CD4-positive, alpha-beta T cell (primary cell): ENCODE measurements at regions of chr7 and their contacts with region 1.

Region 1: DNA sequence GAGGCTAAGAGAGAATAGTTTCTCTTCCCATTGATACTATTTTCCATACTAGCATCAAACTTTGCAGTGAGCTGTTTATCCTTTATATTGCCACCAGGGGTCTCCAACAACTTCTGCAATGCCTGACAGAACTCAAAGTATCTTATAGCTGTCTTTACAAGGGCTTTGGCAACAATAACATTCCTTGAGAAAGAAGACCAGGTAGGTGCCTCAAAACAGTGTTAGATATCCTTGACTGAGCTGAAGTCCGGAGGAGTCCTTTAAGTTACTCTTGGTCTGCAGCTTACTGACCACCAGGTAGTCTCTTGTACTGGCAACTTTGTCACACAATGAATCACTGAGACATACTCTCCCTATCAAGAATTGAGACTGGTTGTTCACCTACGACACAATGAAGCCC is 30.0 kb upstream of the TES start:
- DNase-seq: peak in 8 of 14 experiments; percentile 4 to 78 (median 37)
- ATAC-seq: peak; percentile 91
- H3K4me3 ChIP-seq: no peak overlapping the region
- H3K4me3 Mint-ChIP-seq: no peak overlapping the region
- H3K27ac ChIP-seq: no peak overlapping the region
- H3K27ac Mint-ChIP-seq: no peak overlapping the region
- H3K4me1 ChIP-seq: peaks cover 3% of the 10 kb centered on the region
- H3K4me1 Mint-ChIP-seq: peaks cover 10% of the 10 kb centered on the region
- H3K27me3 ChIP-seq: no peaks in the 10 kb centered on the region
- H3K27me3 Mint-ChIP-seq: no peaks in the 10 kb centered on the region
- CTCF ChIP-seq: peak; percentile 85

Region 2: GRCh38 chr7:116224492-116225098 is 44.3 kb after region 1 on chr7:
- CTCF ChIA-PET with region 1: interaction called, 12 read pairs
- POLR2A ChIA-PET with region 1: interaction called, 4 read pairs
- intact Hi-C with region 1: no loop called
- DNase-seq: peak in 2 of 14 experiments; percentile 58 to 60
- ATAC-seq: peak; percentile 49
- H3K4me3 ChIP-seq: peak overlapping the region; percentile 19
- H3K4me3 Mint-ChIP-seq: peak overlapping the region; percentile 61
- H3K27ac ChIP-seq: no peak overlapping the region
- H3K27ac Mint-ChIP-seq: peak overlapping the region; percentile 73
- H3K4me1 ChIP-seq: peaks cover 44% of the 10 kb centered on the region
- H3K4me1 Mint-ChIP-seq: peaks cover 92% of the 10 kb centered on the region
- H3K27me3 ChIP-seq: no peaks in the 10 kb centered on the region
- H3K27me3 Mint-ChIP-seq: no peaks in the 10 kb centered on the region
- CTCF ChIP-seq: no peak

Region 3: DNA sequence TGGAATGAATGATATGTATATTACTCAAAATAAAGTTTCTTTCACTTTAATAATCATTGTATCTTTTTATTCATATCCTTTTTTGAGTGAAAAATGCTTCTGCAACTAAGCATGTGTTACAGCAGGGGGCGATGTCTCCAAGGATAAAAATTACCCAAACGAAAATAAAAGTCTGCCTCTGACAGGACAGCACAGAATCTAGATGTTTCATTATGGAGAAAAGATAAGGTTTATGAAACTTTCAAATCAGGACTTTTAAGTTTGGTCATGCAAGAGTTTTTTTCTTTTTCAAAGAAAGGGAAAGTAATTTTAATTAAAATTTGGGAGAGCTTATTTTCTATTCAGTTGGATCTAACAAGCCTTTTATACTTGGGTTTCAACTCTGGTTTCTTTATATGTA is 78.4 kb after region 1 on chr7:
- CTCF ChIA-PET with region 1: interaction called, 12 read pairs
- POLR2A ChIA-PET with region 1: interaction called, 3 read pairs
- intact Hi-C with region 1: no loop called
- DNase-seq: peak in 5 of 14 experiments; percentile 16 to 71 (median 56)
- ATAC-seq: peak; percentile 76
- H3K4me3 ChIP-seq: no peak overlapping the region
- H3K4me3 Mint-ChIP-seq: no peak overlapping the region
- H3K27ac ChIP-seq: no peak overlapping the region
- H3K27ac Mint-ChIP-seq: peak overlapping the region; percentile 61
- H3K4me1 ChIP-seq: no peaks in the 10 kb centered on the region
- H3K4me1 Mint-ChIP-seq: peaks cover 20% of the 10 kb centered on the region
- H3K27me3 ChIP-seq: no peaks in the 10 kb centered on the region
- H3K27me3 Mint-ChIP-seq: no peaks in the 10 kb centered on the region
- CTCF ChIP-seq: peak; percentile 77

Region 4: GRCh38 chr7:116588641-116589594 is 408.6 kb after region 1 on chr7:
- CTCF ChIA-PET with region 1: interaction called, 4 read pairs
- POLR2A ChIA-PET with region 1: no interaction called
- intact Hi-C with region 1: loop called in 1 of 2 experiments (anchors 1 kb)
- DNase-seq: peak in 3 of 14 experiments; percentile 46 to 61 (median 57)
- ATAC-seq: no peak
- H3K4me3 ChIP-seq: no peak overlapping the region
- H3K4me3 Mint-ChIP-seq: no peak overlapping the region
- H3K27ac ChIP-seq: no peak overlapping the region
- H3K27ac Mint-ChIP-seq: no peak overlapping the region
- H3K4me1 ChIP-seq: peaks cover 6% of the 10 kb centered on the region
- H3K4me1 Mint-ChIP-seq: peaks cover 22% of the 10 kb centered on the region
- H3K27me3 ChIP-seq: peaks cover 0 to 26% of the 10 kb centered on the region in 2 experiments
- H3K27me3 Mint-ChIP-seq: peaks cover 25% of the 10 kb centered on the region
- CTCF ChIP-seq: peak; percentile 95